Right ventricle myocardium inferior (tissue), 1 donor: ENCODE measurements at regions of chr12 and their contacts with region 1.

Region 1: DNA sequence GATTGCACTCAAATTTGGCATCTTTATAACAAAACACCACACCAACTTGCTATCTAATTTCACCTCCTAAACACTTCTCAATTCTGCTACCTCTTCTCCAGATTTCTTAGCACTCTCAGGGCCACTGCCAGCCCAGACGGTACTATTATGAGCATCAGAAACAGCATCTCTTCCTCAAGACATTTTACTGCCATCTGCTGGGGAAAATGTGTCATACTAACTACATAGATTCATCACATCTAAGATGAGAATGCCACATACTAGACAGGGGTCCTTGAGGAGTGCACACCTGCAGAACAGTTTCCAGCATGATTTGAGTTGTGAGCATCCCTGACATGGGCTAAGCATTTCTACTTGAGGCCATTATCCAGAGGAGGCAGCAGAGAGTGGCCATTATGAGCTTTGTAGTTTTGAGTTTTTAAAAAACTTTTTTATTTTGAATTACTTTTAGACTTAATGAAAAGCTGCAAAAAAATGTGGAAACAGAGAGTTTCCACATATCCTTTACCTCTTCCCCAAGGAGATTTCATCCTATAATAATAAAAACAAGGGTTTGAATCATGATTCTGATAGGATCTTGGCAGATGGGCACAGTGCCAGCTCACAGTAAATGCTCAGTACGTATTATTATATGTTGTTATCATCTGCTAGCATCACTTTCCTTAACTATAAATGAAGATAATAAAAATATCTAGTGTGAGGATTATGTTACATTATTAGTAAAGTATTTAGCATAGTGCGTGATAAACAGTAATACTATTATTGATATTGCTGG is 15.2 kb upstream of the GRIP1 start:
- DNase-seq: no peak
- ATAC-seq: peak; percentile 60

Region 2: DNA sequence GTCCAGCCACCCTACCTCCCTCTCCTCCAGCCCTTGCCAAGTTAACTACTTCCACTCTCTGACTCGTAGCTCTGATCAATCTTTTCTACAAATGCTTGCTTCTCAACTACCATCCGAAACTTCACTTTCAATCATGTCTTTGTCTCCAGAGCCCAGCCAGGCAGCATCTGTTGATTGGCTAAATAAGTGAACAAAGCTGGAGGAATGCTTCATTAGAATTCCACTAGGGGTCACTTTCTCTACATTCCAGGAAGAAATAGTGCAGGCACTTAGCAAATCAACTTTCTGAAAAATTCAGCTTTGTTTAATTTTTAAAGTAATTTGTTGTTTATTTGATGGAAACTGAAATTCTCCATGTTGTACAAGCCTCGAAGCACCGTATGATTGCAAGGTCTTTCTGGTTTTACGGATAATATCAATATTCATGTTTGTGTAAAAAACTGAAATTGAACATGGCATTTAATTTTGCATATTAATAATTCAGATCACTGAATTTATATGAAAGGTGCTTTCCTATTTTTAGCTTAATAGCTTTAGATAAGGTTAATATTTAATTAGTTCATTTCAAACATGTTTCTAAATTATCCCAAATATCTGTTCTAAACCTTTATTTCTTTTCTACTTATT is 424.2 kb before region 1 on chr12:
- intact Hi-C with region 1: loop called (anchors 10 kb)
- DNase-seq: no peak
- ATAC-seq: no peak

Region 3: GRCh38 chr12:67006610-67007009 is 312.5 kb after region 1 on chr12:
- intact Hi-C with region 1: no loop called
- DNase-seq: no peak
- ATAC-seq: no peak